Naive thymus-derived CD4-positive, alpha-beta T cell (primary cell): ENCODE measurements at regions of chr9 and their contacts with region 1.

Region 1: GRCh38 chr9:15422372-15423230 is at the start of gene SNAPC3:
- DNase-seq: peak; percentile 86 to 96 (median 93)
- ATAC-seq: peak; percentile 99
- H3K4me3 ChIP-seq: peak within 1 kb of the TSS; percentile 90
- H3K4me3 Mint-ChIP-seq: peak within 1 kb of the TSS; percentile 89 to 95 (median 92)
- H3K27ac ChIP-seq: peak within 1 kb of the TSS; percentile 74
- H3K27ac Mint-ChIP-seq: peak within 1 kb of the TSS; percentile 89 to 96 (median 93)
- H3K4me1 ChIP-seq: peaks cover 0 to 8% of the 10 kb centered on the region in 2 donors
- H3K4me1 Mint-ChIP-seq: peaks cover 20 to 47% (median 45%) of the 10 kb centered on the region in 7 donors
- H3K27me3 ChIP-seq: no peaks in the 10 kb centered on the region
- H3K27me3 Mint-ChIP-seq: no peaks in the 10 kb centered on the region
- total RNA-seq, gene SNAPC3: 11.9 to 44.4 (median 33.5) TPM

Region 2: GRCh38 chr9:15295761-15296405 is 126.7 kb before region 1 on chr9:
- CTCF ChIA-PET with region 1: interaction called, 3 read pairs
- POLR2A ChIA-PET with region 1: interaction called, 4 read pairs
- intact Hi-C with region 1: loop called (anchors 1 to 2 kb)
- DNase-seq: peak in 7 of 9 donors; percentile 37 to 72 (median 53)
- ATAC-seq: peak; percentile 59
- H3K4me3 ChIP-seq: peak overlapping the region; percentile 41
- H3K4me3 Mint-ChIP-seq: peak overlapping the region; percentile 70 to 98 (median 84)
- H3K27ac ChIP-seq: peak overlapping the region; percentile 88
- H3K27ac Mint-ChIP-seq: peak overlapping the region; percentile 96 to 99 (median 98)
- H3K4me1 ChIP-seq: peaks cover 71 to 82% of the 10 kb centered on the region in 2 donors
- H3K4me1 Mint-ChIP-seq: peaks cover 61 to 93% (median 88%) of the 10 kb centered on the region in 7 donors
- H3K27me3 ChIP-seq: no peaks in the 10 kb centered on the region
- H3K27me3 Mint-ChIP-seq: no peaks in the 10 kb centered on the region

Region 3: GRCh38 chr9:15306757-15307534 is 115.7 kb before region 1 on chr9 and contains the start of gene TTC39B:
- CTCF ChIA-PET with region 1: interaction called, 3 read pairs
- POLR2A ChIA-PET with region 1: interaction called, 7 read pairs
- intact Hi-C with region 1: loop called (anchors 1 kb)
- DNase-seq: peak; percentile 34 to 88 (median 53)
- ATAC-seq: peak; percentile 87
- H3K4me3 ChIP-seq: peak within 1 kb of the TSS; percentile 86
- H3K4me3 Mint-ChIP-seq: peak within 1 kb of the TSS; percentile 89 to 99 (median 97)
- H3K27ac ChIP-seq: peak within 1 kb of the TSS; percentile 81
- H3K27ac Mint-ChIP-seq: peak within 1 kb of the TSS; percentile 84 to 97 (median 95)
- H3K4me1 ChIP-seq: peaks cover 25 to 44% of the 10 kb centered on the region in 2 donors
- H3K4me1 Mint-ChIP-seq: peaks cover 37 to 66% (median 61%) of the 10 kb centered on the region in 7 donors
- H3K27me3 ChIP-seq: no peaks in the 10 kb centered on the region
- H3K27me3 Mint-ChIP-seq: no peaks in the 10 kb centered on the region
- total RNA-seq, gene TTC39B: 29.1 to 49.3 (median 42.8) TPM

Region 4: DNA sequence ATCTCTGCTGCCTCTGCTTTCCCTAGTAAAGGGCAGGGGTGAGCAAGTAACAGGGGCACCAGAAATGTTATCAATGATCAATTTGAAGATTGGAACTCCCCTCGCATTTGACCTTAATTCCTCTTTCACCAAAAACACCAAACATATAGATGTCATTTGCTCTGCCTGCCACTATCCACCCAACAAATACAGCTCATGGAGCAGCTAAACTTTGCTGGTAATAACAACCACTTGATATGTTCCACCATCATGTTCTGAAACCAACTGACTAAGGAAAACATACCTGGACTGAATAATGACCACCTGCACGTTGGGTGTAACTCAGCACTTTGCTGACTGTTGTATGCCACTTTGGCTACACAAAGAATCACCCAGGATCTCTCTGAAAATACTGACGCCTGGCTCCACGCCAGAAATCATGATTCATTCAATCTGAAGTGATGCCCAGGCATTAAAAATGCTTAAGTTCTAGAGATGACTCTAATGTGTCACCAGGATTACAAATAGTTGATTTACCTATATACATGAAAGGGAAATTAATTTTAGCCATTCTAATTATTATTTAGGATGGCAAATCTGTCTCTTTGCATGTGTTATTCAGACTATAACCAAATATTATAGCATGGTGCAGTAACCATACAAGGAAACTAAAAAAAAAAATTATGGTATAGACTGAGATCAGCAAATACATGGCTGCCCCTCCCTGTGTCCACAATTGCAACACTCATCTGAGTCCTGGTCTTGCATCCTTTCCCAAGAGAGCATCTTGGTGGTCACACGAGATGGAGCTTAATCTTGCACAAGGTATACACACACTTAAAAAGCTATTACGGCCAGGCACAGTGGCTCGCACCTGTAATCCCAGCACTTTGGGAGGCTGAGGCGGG is 72.5 kb before region 1 on chr9:
- CTCF ChIA-PET with region 1: interaction called, 3 read pairs
- POLR2A ChIA-PET with region 1: interaction called, 3 read pairs
- intact Hi-C with region 1: loop called (anchors 1 to 2 kb)
- DNase-seq: no peak
- ATAC-seq: no peak
- H3K4me3 ChIP-seq: no peak overlapping the region
- H3K4me3 Mint-ChIP-seq: no peak overlapping the region
- H3K27ac ChIP-seq: no peak overlapping the region
- H3K27ac Mint-ChIP-seq: peak overlapping the region in 1 of 9 donors; percentile 51
- H3K4me1 ChIP-seq: peaks cover 0 to 20% of the 10 kb centered on the region in 2 donors
- H3K4me1 Mint-ChIP-seq: peaks cover 11 to 40% (median 34%) of the 10 kb centered on the region in 7 donors
- H3K27me3 ChIP-seq: no peaks in the 10 kb centered on the region
- H3K27me3 Mint-ChIP-seq: no peaks in the 10 kb centered on the region

Region 5: DNA sequence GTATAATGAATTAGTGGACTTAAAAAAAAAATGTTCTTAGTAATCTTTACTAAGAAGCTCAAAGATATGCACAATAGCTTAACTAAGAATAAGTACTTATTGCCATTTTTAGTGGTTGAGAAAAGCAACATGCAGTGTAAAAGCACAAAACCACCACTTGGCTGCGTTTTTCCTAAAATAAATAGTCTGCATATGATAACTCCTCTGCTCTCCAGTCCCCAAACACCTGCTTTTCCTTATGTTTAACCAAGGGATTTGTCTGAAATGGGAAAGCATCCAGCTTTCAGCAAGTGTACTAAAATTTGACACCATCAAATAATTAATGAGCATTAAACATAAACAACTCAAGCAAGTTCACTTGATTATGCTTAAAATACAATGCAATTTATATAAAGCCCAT is 46.8 kb after region 1 on chr9:
- CTCF ChIA-PET with region 1: no interaction called
- POLR2A ChIA-PET with region 1: interaction called, 3 read pairs
- intact Hi-C with region 1: loop called (anchors 2 to 10 kb)
- DNase-seq: no peak
- ATAC-seq: no peak
- H3K4me3 ChIP-seq: no peak overlapping the region
- H3K4me3 Mint-ChIP-seq: no peak overlapping the region
- H3K27ac ChIP-seq: no peak overlapping the region
- H3K27ac Mint-ChIP-seq: peak overlapping the region in 7 of 9 donors; percentile 6 to 82 (median 57)
- H3K4me1 ChIP-seq: no peaks in the 10 kb centered on the region
- H3K4me1 Mint-ChIP-seq: peaks cover 5 to 31% (median 19%) of the 10 kb centered on the region in 7 donors
- H3K27me3 ChIP-seq: no peaks in the 10 kb centered on the region
- H3K27me3 Mint-ChIP-seq: no peaks in the 10 kb centered on the region

Region 6: DNA sequence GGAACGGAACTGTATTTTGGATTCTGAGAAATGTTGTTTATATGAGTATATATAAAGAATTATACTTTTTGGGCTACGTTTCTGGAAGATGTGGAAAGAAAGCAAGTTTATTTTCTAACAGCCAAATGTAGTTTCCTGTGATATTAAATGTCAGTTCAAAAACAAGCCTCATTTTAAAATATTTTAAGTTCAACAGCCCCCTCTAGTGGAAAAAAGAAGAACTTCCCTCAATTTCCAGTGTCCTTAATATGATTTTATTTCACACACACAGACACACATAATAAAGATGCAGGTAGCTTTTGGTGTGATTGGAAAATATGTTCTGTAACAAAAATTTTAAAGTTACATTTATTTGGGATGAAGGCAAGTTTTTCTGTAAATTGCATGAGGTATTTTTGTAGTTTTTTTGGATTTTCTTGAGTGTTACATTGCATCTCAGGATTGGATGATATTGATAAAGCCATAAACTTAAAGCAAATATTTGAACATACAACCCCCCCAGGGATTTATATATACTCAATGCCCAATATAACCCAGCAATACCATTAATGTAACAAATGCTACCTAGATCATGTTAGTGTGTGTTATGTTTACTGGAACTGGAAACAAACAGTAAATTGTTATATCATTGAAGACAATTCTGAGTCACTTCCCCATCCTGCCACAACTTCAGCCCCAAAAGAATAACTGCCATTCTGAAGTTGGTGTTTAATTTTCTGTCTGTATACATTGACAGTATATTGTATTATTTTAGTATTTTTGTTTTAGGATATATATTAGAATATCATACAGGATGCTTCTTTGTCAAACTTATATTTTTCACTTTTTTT is 184.3 kb after region 1 on chr9:
- CTCF ChIA-PET with region 1: no interaction called
- POLR2A ChIA-PET with region 1: no interaction called
- intact Hi-C with region 1: loop called (anchors 1 to 5 kb)
- DNase-seq: peak in 7 of 9 donors; percentile 29 to 71 (median 60)
- ATAC-seq: peak; percentile 55
- H3K4me3 ChIP-seq: no peak overlapping the region
- H3K4me3 Mint-ChIP-seq: no peak overlapping the region
- H3K27ac ChIP-seq: no peak overlapping the region
- H3K27ac Mint-ChIP-seq: no peak overlapping the region
- H3K4me1 ChIP-seq: no peaks in the 10 kb centered on the region
- H3K4me1 Mint-ChIP-seq: peaks cover 0 to 7% (median 0%) of the 10 kb centered on the region in 7 donors
- H3K27me3 ChIP-seq: no peaks in the 10 kb centered on the region
- H3K27me3 Mint-ChIP-seq: no peaks in the 10 kb centered on the region

Region 7: DNA sequence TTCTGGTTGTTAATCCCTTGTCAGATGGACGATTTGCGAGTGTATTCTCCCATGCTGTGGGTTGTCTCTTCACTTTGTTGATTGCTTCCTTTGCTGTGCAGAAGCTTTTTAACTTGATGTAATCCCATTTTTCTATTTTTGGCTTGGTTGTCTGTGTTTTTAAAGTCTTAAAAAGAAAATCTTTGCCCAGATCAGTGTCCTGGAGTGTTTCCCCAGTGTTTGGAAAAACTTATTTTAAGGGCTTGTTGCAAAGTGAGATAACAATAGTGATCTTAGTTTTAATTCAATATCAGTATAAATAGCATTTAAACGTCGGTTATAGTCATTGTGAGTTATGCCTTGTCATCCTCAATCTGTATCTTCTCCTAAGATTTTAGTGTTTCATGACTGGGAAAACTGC is 459.7 kb after region 1 on chr9:
- CTCF ChIA-PET with region 1: no interaction called
- POLR2A ChIA-PET with region 1: no interaction called
- intact Hi-C with region 1: no loop called
- DNase-seq: no peak
- ATAC-seq: no peak
- H3K4me3 ChIP-seq: no peak overlapping the region
- H3K4me3 Mint-ChIP-seq: no peak overlapping the region
- H3K27ac ChIP-seq: no peak overlapping the region
- H3K27ac Mint-ChIP-seq: no peak overlapping the region
- H3K4me1 ChIP-seq: no peaks in the 10 kb centered on the region
- H3K4me1 Mint-ChIP-seq: no peaks in the 10 kb centered on the region
- H3K27me3 ChIP-seq: no peaks in the 10 kb centered on the region
- H3K27me3 Mint-ChIP-seq: no peaks in the 10 kb centered on the region